Endothelial cell of umbilical vein (primary cell): ENCODE measurements at regions of chr4 and their contacts with region 1.

Region 1: GRCh38 chr4:169566021-169566818 is 46.2 kb downstream of the NEK1 start:
- DNase-seq: peak; percentile 80
- H3K4me3 ChIP-seq: no peak overlapping the region
- H3K27ac ChIP-seq: no peak overlapping the region
- H3K4me1 ChIP-seq: no peaks in the 10 kb centered on the region
- H3K27me3 ChIP-seq: no peaks in the 10 kb centered on the region
- CTCF ChIP-seq: peak; percentile 50
- POLR2A ChIP-seq: no peak

Region 2: DNA sequence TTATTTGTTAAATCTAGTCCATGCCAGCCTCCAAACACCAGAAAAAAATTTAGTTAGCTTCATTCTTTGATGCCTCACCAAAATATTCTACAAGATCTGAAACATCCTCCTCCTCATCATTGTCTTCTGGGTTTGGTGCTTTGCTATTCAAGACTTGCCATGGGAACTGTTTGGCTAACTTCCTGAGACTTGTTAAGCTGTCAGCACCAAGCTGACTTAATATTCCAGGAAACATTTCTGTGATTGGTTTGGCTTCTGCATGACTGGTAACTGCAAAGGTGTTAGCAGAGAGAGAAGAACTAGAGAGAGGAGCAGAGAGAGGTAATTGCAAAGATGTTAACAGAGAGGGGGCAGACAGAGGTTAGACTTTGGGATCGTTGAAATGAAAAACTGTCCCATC is 968.0 kb before region 1 on chr4:
- CTCF ChIA-PET with region 1: no interaction called
- POLR2A ChIA-PET with region 1: no interaction called
- dilution Hi-C with region 1: no loop called
- intact Hi-C with region 1: no loop called
- DNase-seq: peak; percentile 12
- H3K4me3 ChIP-seq: no peak overlapping the region
- H3K27ac ChIP-seq: no peak overlapping the region
- H3K4me1 ChIP-seq: no peaks in the 10 kb centered on the region
- H3K27me3 ChIP-seq: no peaks in the 10 kb centered on the region
- CTCF ChIP-seq: no peak
- POLR2A ChIP-seq: no peak

Region 3: DNA sequence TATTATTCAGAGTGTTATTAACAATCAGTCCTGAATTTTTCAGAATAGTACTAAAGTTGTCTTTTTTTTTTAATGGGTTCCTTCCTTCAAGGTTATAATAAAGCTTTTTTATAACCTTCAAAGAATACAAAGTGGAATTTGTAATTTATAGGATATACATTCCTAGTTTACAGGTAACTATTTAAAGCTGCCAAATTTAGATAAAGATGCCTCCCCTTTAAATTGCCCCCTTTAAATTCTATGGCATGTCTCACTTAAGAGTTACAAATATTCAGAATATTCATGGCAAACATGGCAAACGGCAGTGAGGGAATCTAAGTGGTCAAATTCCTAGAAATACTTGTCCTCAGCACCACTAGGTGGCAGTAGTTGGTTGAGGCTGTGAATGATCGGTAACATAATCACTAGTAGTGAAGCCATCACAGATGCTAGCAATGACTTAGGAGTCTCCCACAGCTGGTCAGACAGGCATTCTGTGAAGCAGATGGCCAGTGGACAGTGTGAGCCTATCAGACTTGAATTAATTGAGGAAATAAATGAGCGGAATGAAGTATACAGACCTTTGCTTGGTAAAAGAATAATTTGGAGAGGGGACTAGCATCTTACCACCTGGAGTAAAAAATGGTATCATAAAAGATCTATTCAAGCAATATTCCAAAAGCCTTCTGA is 642.6 kb before region 1 on chr4:
- CTCF ChIA-PET with region 1: interaction called, 43 read pairs
- POLR2A ChIA-PET with region 1: no interaction called
- dilution Hi-C with region 1: no loop called
- intact Hi-C with region 1: loop called (anchors 1 kb)
- DNase-seq: peak; percentile 67
- H3K4me3 ChIP-seq: no peak overlapping the region
- H3K27ac ChIP-seq: no peak overlapping the region
- H3K4me1 ChIP-seq: no peaks in the 10 kb centered on the region
- H3K27me3 ChIP-seq: no peaks in the 10 kb centered on the region
- CTCF ChIP-seq: peak; percentile 57 to 66
- POLR2A ChIP-seq: no peak

Region 4: GRCh38 chr4:168995537-168996295 is 570.5 kb before region 1 on chr4:
- CTCF ChIA-PET with region 1: interaction called, 5 read pairs
- POLR2A ChIA-PET with region 1: no interaction called
- dilution Hi-C with region 1: no loop called
- intact Hi-C with region 1: loop called (anchors 1 kb)
- DNase-seq: peak; percentile 24
- H3K4me3 ChIP-seq: no peak overlapping the region
- H3K27ac ChIP-seq: no peak overlapping the region
- H3K4me1 ChIP-seq: no peaks in the 10 kb centered on the region
- H3K27me3 ChIP-seq: no peaks in the 10 kb centered on the region
- CTCF ChIP-seq: peak in 1 of 2 donors; percentile 3
- POLR2A ChIP-seq: no peak

Region 5: DNA sequence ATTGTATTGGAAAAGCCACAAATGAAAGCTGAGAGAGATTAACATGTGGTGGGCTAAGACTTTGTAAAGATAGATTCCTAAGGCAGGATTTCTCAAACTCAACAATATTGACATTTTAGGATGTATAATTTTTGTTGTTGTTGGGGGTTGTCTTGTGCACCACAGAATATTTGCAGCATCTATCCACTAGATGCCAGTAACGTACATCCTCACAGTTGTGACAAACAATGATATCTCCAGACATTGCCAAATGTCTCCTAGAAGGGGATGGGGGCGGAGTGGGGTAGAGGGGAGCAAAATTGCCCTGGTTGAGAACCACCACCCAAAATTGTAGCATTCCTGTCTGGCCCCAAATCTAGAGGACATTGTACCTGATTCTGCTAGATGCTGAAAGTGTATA is 541.5 kb before region 1 on chr4:
- CTCF ChIA-PET with region 1: interaction called, 4 read pairs
- POLR2A ChIA-PET with region 1: no interaction called
- dilution Hi-C with region 1: no loop called
- intact Hi-C with region 1: loop called (anchors 2 kb)
- DNase-seq: peak; percentile 68
- H3K4me3 ChIP-seq: no peak overlapping the region
- H3K27ac ChIP-seq: no peak overlapping the region
- H3K4me1 ChIP-seq: no peaks in the 10 kb centered on the region
- H3K27me3 ChIP-seq: no peaks in the 10 kb centered on the region
- CTCF ChIP-seq: peak; percentile 51 to 57
- POLR2A ChIP-seq: no peak

Region 6: GRCh38 chr4:169492438-169493163 is 73.6 kb before region 1 on chr4:
- CTCF ChIA-PET with region 1: interaction called, 14 read pairs
- POLR2A ChIA-PET with region 1: no interaction called
- dilution Hi-C with region 1: no loop called
- intact Hi-C with region 1: loop called (anchors 1 kb)
- DNase-seq: peak; percentile 52
- H3K4me3 ChIP-seq: no peak overlapping the region
- H3K27ac ChIP-seq: no peak overlapping the region
- H3K4me1 ChIP-seq: no peaks in the 10 kb centered on the region
- H3K27me3 ChIP-seq: no peaks in the 10 kb centered on the region
- CTCF ChIP-seq: peak; percentile 70 to 72
- POLR2A ChIP-seq: no peak

Region 7: DNA sequence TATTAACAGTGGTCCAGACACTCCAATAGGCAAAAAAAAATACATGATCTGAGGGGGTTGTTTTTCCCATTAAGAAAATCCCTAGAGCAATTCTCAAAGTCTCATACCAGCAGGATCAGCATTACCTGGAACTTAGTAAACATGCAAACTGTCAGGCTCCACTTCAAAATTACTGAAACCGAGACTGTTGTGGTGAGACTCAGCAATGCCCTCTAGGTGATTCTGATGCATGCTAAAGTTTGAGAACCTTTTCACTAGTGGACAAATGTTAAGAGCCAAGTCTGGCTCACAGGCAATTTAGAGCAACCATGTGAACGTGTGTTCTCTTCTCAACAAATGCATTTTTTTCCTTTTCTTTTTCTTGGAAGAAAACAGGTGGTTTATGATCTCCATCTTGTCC is 16.0 kb after region 1 on chr4:
- CTCF ChIA-PET with region 1: interaction called, 27 read pairs
- POLR2A ChIA-PET with region 1: no interaction called
- dilution Hi-C with region 1: no loop called
- intact Hi-C with region 1: no loop called
- DNase-seq: no peak
- H3K4me3 ChIP-seq: no peak overlapping the region
- H3K27ac ChIP-seq: no peak overlapping the region
- H3K4me1 ChIP-seq: no peaks in the 10 kb centered on the region
- H3K27me3 ChIP-seq: no peaks in the 10 kb centered on the region
- CTCF ChIP-seq: no peak
- POLR2A ChIP-seq: no peak

Region 8: GRCh38 chr4:169593050-169593560 is 26.9 kb after region 1 on chr4:
- CTCF ChIA-PET with region 1: interaction called, 12 read pairs
- POLR2A ChIA-PET with region 1: no interaction called
- dilution Hi-C with region 1: no loop called
- intact Hi-C with region 1: no loop called
- DNase-seq: no peak
- H3K4me3 ChIP-seq: no peak overlapping the region
- H3K27ac ChIP-seq: no peak overlapping the region
- H3K4me1 ChIP-seq: no peaks in the 10 kb centered on the region
- H3K27me3 ChIP-seq: no peaks in the 10 kb centered on the region
- CTCF ChIP-seq: no peak
- POLR2A ChIP-seq: no peak